ENCODE measurements at regions of chr3 and their contacts with region 1.

Region 1: GRCh38 chr3:130759699-130760338 is 13.2 kb upstream of the PIK3R4 start:
- DNase-seq: peak; percentile 55
- H3K4me3 ChIP-seq: peak overlapping the region in 1 of 2 experiments; percentile 15; a peak in 1 of 4 replicates
- H3K27ac ChIP-seq: no peak overlapping the region; a peak in 1 of 4 replicates
- H3K4me1 ChIP-seq: no peaks in the 10 kb centered on the region; a peak in 1 of 4 replicates
- H3K27me3 ChIP-seq: 0 out of 2 replicates have a peak, but pooled peaks cover 5% of the 10 kb centered on the region
- CTCF ChIP-seq: peak; percentile 90
- EP300 ChIP-seq: no peak
- RAD21 ChIP-seq: peak; percentile 90

Region 2: GRCh38 chr3:130731817-130732216 is 28.0 kb before region 1 on chr3:
- CTCF ChIA-PET with region 1: no interaction called
- POLR2A ChIA-PET with region 1: no interaction called
- DNase-seq: no peak
- H3K4me3 ChIP-seq: no peak overlapping the region
- H3K27ac ChIP-seq: no peak overlapping the region
- H3K4me1 ChIP-seq: peaks cover 0 to 3% of the 10 kb centered on the region in 2 experiments; a peak in 1 of 4 replicates
- H3K27me3 ChIP-seq: no peaks in the 10 kb centered on the region
- CTCF ChIP-seq: no peak
- EP300 ChIP-seq: no peak
- RAD21 ChIP-seq: no peak

Region 3: DNA sequence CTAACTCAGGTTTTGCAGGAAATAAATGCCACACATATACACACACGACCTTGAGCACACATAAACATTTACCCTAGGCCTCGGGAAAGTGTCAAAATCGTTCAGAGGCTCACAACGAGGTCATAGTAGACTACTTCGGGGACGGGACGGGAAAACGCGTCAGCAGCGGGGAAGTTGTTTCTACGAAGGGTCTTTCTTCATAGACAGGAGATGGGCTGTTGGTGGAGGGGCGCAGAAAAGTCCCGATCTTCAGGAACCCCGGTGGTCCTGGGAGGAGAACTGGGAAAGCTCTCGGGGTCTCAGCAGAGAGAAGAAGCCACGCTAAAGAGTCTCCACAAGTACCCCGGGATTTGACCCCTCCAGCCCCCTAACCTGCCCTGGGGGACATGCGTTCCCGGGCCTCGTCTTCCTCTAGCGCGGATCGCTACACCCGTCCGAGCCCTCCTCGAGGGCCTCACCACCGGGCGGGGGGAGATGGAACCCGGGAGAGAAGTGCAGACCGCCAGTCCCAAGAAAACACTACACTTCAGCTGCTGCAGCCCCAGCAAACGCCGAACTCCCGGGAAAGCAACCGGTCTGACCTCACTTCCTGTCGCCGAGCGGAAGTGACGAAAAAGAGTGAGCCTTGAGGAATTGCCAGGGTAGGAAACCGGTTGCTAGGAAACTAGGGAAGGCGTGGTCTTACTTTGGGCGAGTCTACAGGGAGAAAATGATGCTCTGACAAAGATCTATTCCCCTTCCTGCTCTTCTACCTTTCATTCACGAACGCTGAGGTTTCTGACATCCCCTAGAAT is 13.4 kb before region 1 on chr3 and contains the start of gene PIK3R4:
- CTCF ChIA-PET with region 1: interaction called, 16 read pairs
- POLR2A ChIA-PET with region 1: no interaction called
- DNase-seq: peak; percentile 91
- H3K4me3 ChIP-seq: peak within 1 kb of the TSS; percentile 97 to 99
- H3K27ac ChIP-seq: peak within 1 kb of the TSS; percentile 75 to 80
- H3K4me1 ChIP-seq: peaks cover 11 to 19% of the 10 kb centered on the region in 2 experiments; a peak in 3 of 4 replicates
- H3K27me3 ChIP-seq: no peaks in the 10 kb centered on the region
- CTCF ChIP-seq: no peak
- EP300 ChIP-seq: no peak
- RAD21 ChIP-seq: no peak
- polyA plus RNA-seq, gene PIK3R4: 27.2 and 27.9 TPM in 2 replicates

Region 4: DNA sequence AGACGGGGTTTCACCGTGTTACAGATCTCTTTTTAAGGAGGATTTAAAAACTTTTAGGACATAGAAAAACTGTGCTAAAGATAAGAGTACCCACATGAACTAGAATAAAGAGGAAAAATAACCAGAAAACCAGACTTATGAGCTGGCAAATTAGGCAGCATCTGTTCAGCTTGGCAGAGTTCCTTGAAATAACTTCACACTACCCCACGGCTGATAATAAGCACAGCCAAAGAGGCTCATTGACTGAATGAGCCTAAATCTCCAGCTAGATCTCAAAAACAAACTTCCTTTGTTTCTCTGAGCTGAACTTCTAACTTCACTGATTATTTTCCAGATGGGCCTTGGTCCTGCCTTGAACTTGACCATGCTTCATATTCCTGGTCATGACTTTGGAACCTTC is 13.5 kb after region 1 on chr3:
- CTCF ChIA-PET with region 1: interaction called, 28 read pairs
- POLR2A ChIA-PET with region 1: no interaction called
- DNase-seq: no peak
- H3K4me3 ChIP-seq: no peak overlapping the region
- H3K27ac ChIP-seq: no peak overlapping the region
- H3K4me1 ChIP-seq: no peaks in the 10 kb centered on the region
- H3K27me3 ChIP-seq: no peaks in the 10 kb centered on the region
- CTCF ChIP-seq: no peak
- EP300 ChIP-seq: no peak
- RAD21 ChIP-seq: no peak